G401 (cell line): ENCODE measurements at regions of chr6 and their contacts with region 1.

Region 1: GRCh38 chr6:111522393-111523020 is 39.5 kb upstream of the REV3L start:
- DNase-seq: no peak

Region 2: GRCh38 chr6:110537208-110538123 is 985.0 kb before region 1 on chr6:
- in situ Hi-C with region 1: loop called (anchors 10 kb)
- DNase-seq: no peak

Region 3: DNA sequence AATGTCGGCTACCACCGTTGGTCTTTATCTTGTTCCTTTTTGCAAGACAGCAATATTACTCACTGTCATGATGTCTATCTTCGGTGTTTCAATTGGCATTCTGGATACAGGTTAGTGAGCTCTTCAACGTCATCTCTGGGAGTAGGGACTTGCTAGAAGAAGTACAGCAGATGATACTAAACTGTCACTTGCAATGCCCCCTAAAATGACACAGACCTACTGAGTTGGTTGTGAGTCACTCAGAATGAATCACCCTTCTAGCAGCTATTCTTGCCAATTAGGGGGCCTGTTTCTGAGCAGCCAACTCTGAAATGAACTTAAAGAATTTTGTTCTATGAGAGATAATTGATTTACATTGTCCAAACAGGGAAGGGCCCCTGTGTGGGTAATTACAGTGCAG is 258.7 kb before region 1 on chr6:
- in situ Hi-C with region 1: no loop called
- DNase-seq: no peak

Region 4: DNA sequence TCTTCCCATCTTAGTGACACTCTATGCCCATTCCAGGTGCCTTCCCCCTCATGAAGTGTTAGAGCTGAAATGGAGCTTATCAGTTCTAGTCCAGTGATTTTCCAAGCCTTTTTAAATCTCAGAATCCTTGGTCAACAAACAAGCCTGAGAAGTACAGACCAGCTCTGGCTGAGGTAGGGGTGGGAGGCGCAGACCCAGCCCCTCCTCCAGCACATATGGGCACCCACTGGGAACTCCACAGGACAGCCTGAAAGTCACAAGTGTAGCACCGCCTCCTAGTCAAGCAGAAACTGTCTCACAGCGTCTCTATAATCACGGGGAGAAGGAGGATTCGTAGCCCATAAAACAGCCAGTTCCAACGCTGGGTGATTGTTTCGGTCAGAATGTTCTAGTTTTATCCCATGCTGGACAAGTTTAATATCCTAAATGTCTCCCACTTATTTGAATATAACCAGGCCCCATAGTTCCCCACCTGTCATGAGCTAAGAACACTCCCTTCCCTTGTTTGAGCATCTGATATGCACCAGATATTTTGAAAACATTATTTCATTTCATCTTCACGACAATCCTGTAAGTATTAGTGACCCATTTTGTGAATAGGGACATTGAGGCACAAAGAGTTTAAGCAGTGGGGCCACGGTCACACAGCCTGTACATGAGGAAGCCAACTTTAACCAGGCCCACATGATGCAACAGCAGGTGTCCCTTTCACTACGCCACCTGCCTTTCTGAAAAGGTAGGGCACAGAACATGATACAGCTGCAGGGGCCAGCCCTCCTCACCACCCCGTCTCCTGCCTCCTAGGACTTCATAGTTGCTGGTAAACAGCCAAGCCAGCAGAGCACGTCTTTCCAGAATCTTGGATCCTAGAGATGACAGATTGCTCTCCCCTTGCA is 43.1 kb after region 1 on chr6:
- in situ Hi-C with region 1: no loop called
- DNase-seq: no peak

Region 5: GRCh38 chr6:111632468-111633247 is 110.2 kb after region 1 on chr6:
- in situ Hi-C with region 1: no loop called
- DNase-seq: no peak